Endothelial cell of umbilical vein (primary cell): ENCODE measurements at regions of chr2 and their contacts with region 1.

Region 1: DNA sequence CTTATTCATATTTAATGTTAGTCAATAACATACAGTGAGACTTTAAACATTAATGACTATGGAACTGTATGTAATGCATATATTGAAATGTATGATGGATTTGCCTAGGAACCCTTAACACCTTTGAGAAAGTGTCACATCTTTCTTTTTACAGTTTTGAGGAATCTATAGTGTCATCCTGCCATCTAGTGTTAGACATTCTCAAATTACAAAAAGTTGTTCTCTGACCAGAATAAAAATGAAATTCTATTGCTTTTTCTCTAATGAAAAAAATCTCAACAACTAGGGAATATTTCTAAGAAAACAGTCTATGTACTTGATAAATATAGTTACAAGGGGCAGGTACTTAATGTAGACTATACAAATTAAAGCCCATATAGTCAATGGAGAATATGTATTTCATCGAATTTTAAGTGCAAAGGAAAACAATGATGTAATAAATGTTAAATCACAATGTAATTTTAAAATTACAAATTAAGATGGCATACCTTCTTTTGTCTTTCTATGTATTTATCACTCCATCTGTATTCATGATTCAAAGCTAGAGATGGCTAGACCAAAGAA is 5.1 kb upstream of the CALCRL start:
- DNase-seq: peak; percentile 68
- H3K4me3 ChIP-seq: no peak overlapping the region
- H3K27ac ChIP-seq: no peak overlapping the region
- H3K4me1 ChIP-seq: peaks cover 6% of the 10 kb centered on the region
- H3K27me3 ChIP-seq: no peaks in the 10 kb centered on the region
- CTCF ChIP-seq: peak; percentile 10 to 12
- POLR2A ChIP-seq: no peak

Region 2: DNA sequence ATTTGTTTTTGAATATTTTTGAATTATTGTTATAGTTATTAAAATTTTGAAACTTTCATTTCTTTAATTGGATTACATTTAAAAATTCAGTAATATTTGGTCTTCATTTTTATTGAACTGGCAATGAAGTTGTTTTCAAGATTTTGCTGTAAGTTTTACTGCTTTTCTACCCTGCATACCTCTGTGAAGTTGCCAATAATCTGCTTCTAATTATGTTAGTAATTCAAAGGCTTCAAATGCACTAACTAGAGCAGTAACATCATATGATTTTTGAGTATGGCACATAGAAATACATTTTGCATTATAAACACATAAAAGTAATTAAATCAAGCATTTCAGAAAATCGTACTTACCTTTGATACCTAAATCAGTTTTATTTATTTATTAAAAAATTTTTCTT is 799.6 kb before region 1 on chr2:
- CTCF ChIA-PET with region 1: no interaction called
- POLR2A ChIA-PET with region 1: no interaction called
- dilution Hi-C with region 1: no loop called
- intact Hi-C with region 1: loop called (anchors 10 kb)
- DNase-seq: no peak
- H3K4me3 ChIP-seq: no peak overlapping the region
- H3K27ac ChIP-seq: no peak overlapping the region
- H3K4me1 ChIP-seq: no peaks in the 10 kb centered on the region
- H3K27me3 ChIP-seq: no peaks in the 10 kb centered on the region
- CTCF ChIP-seq: no peak
- POLR2A ChIP-seq: no peak

Region 3: DNA sequence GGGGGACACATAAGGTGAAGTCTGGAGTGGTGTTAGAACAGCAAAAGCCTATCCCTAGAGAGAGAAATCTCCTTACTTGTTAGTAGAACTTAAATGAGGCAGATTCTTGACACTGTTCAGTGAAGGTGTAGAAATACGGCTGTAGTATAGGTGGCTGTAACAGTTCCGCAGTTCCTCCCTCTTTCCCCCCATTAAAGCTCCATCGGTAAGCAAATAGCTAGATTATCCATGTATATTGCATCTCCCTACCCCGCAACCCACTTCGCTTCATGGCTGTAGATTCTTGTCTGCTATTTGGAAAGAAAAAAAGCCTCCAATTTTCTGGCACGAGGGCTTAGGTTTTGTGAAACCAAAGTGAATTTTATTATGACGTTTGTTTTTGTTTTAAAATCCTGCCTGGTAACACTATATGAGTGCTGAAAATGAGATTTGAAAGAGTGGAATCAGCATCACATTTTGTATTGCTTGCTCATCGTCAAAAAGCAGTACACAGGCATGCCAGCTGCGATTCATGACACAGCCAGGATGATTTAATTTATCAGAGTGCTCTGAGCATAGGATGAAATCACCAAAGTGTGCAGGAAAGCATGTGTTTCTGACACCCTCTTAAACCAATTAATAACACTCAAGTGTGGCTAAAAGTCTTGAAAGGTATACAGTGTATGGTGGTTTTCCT is 757.9 kb before region 1 on chr2:
- CTCF ChIA-PET with region 1: no interaction called
- POLR2A ChIA-PET with region 1: no interaction called
- dilution Hi-C with region 1: no loop called
- intact Hi-C with region 1: loop called (anchors 10 kb)
- DNase-seq: peak; percentile 61
- H3K4me3 ChIP-seq: peak overlapping the region; percentile 20 to 63 (median 23)
- H3K27ac ChIP-seq: no peak overlapping the region
- H3K4me1 ChIP-seq: peaks cover 14% of the 10 kb centered on the region
- H3K27me3 ChIP-seq: no peaks in the 10 kb centered on the region
- CTCF ChIP-seq: no peak
- POLR2A ChIP-seq: no peak

Region 4: GRCh38 chr2:186991766-186992417 is 461.3 kb before region 1 on chr2:
- CTCF ChIA-PET with region 1: interaction called, 16 read pairs
- POLR2A ChIA-PET with region 1: no interaction called
- dilution Hi-C with region 1: no loop called
- intact Hi-C with region 1: loop called (anchors 1 kb)
- DNase-seq: peak; percentile 74
- H3K4me3 ChIP-seq: no peak overlapping the region
- H3K27ac ChIP-seq: no peak overlapping the region
- H3K4me1 ChIP-seq: peaks cover 25% of the 10 kb centered on the region
- H3K27me3 ChIP-seq: no peaks in the 10 kb centered on the region
- CTCF ChIP-seq: peak; percentile 0 to 9
- POLR2A ChIP-seq: no peak